Activated CD4-positive, alpha-beta T cell treated with anti-CD3 and anti-CD28 coated beads, Interleukin-2, amount 10 ng/mL, durations not matched to agents 24 days and 14 days (primary cell): ENCODE measurements at regions of chr20 and their contacts with region 1.

Region 1: GRCh38 chr20:51624157-51624731 is 81.7 kb upstream of the NFATC2 start:
- DNase-seq: peak; percentile 88
- H3K4me3 Mint-ChIP-seq: no peak overlapping the region
- H3K27ac Mint-ChIP-seq: no peak overlapping the region
- H3K4me1 Mint-ChIP-seq: peaks cover 11% of the 10 kb centered on the region
- H3K27me3 Mint-ChIP-seq: peaks cover 2% of the 10 kb centered on the region

Region 2: GRCh38 chr20:50987592-50988210 is 636.5 kb before region 1 on chr20:
- intact Hi-C with region 1: loop called (anchors 5 kb)
- DNase-seq: peak; percentile 92
- H3K4me3 Mint-ChIP-seq: no peak overlapping the region
- H3K27ac Mint-ChIP-seq: no peak overlapping the region
- H3K4me1 Mint-ChIP-seq: peaks cover 3% of the 10 kb centered on the region
- H3K27me3 Mint-ChIP-seq: peaks cover 26% of the 10 kb centered on the region

Region 3: GRCh38 chr20:51220293-51220706 is 403.9 kb before region 1 on chr20:
- intact Hi-C with region 1: loop called (anchors 10 kb)
- DNase-seq: peak; percentile 86
- H3K4me3 Mint-ChIP-seq: no peak overlapping the region
- H3K27ac Mint-ChIP-seq: no peak overlapping the region
- H3K4me1 Mint-ChIP-seq: peaks cover 5% of the 10 kb centered on the region
- H3K27me3 Mint-ChIP-seq: peaks cover 30% of the 10 kb centered on the region

Region 4: GRCh38 chr20:51372176-51372803 is 252.0 kb before region 1 on chr20:
- intact Hi-C with region 1: loop called (anchors 1 kb)
- DNase-seq: peak; percentile 87
- H3K4me3 Mint-ChIP-seq: no peak overlapping the region
- H3K27ac Mint-ChIP-seq: no peak overlapping the region
- H3K4me1 Mint-ChIP-seq: peaks cover 16% of the 10 kb centered on the region
- H3K27me3 Mint-ChIP-seq: no peaks in the 10 kb centered on the region

Region 5: DNA sequence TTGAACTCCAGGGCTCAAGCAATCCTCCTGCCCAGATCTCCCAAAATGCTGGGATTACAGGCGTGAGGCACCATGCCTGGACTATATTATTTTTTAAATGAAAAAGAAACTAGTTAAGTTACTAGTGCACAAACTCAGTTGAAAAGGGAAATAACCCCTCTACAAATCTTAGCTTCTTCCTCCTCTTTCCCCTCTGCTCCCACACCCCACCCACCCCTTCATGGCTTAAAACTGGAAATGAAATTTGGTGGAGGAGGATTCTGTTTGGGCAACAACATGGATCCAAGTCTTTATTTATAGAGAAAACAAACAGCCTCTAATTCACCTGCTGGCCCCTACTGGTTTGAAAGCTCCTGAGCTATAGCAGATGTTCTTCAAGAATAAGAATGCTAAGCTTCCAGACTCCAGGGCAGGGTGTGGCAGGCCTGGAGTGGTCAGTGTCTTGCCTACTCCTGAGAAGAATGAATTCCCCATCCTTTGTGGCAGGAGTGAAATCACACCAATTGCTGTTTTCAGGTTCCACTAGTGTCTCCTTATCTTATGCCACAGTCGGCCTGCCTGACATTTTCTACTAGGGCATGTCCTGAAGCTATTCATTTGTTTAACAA is 493.9 kb after region 1 on chr20:
- intact Hi-C with region 1: no loop called
- DNase-seq: no peak
- H3K4me3 Mint-ChIP-seq: no peak overlapping the region
- H3K27ac Mint-ChIP-seq: no peak overlapping the region
- H3K4me1 Mint-ChIP-seq: no peaks in the 10 kb centered on the region
- H3K27me3 Mint-ChIP-seq: no peaks in the 10 kb centered on the region